Activated naive CD4-positive, alpha-beta T cell treated with anti-CD3 and anti-CD28 coated beads for 36 hours (primary cell): ENCODE measurements at regions of chr7 and their contacts with region 1.

Region 1: GRCh38 chr7:99631295-99632109 is 14.8 kb downstream of the ZSCAN25 start:
- DNase-seq: peak; percentile 85
- H3K4me3 Mint-ChIP-seq: no peak overlapping the region
- H3K27ac Mint-ChIP-seq: peak overlapping the region; percentile 97
- H3K4me1 Mint-ChIP-seq: peaks cover 62% of the 10 kb centered on the region
- H3K27me3 Mint-ChIP-seq: no peaks in the 10 kb centered on the region

Region 2: DNA sequence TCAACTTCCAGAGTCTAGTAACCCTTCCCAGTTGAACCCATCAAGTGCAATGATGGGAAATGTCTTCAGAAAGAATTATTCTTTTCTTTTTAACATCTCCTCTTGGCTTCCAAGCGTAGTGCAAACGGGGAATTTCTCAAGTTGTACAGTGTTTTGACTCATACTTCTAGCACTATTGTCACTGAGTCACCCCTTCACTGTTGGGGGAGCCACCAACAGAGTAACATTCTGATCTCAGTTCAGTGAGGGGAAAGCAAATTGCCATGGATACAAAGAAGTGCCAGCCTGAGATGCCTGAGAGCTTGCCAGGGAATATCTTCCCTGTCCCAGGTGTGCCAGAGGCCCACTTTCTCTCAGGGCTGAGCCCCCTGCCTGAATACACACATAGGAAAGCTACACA is 17.3 kb after region 1 on chr7:
- CTCF ChIA-PET with region 1: no interaction called
- intact Hi-C with region 1: loop called (anchors 2 kb)
- DNase-seq: peak; percentile 74
- H3K4me3 Mint-ChIP-seq: no peak overlapping the region
- H3K27ac Mint-ChIP-seq: peak overlapping the region; percentile 84
- H3K4me1 Mint-ChIP-seq: peaks cover 18% of the 10 kb centered on the region
- H3K27me3 Mint-ChIP-seq: no peaks in the 10 kb centered on the region

Region 3: DNA sequence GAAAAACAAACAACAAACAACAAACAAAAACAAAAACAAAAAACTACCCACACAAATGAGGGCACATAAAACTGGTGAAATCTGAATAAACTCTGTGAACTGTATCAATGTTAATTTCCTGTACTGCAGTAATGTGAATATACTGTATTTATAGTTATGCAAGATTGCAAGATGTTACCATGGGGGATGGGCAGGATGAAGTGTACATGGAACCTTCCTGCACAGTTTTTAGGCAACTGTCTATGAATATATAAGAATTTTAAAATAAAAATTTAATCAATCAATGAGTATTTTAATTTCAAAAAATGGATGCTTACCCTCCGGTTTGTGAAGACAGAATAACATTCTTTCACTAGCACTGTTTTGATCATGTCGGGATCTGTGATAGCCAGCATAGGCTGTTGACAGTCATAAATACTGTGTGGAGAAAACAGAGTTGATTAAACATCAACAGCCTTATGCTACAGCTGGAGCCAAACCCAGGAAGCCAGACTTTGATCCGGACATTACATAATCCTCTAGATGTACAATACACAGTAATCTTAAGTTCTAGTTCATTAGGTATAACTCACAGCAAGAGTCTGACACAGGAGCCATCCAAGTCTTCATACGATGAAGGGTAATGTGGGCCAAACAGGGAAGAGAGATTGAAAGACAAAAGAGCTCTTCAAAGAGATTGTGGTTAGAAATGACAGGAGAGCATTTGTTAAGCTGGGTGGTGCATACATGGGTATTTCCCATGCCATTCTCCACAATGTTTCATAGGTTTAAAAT is 88.7 kb after region 1 on chr7:
- CTCF ChIA-PET with region 1: no interaction called
- intact Hi-C with region 1: loop called (anchors 1 kb)
- DNase-seq: no peak
- H3K4me3 Mint-ChIP-seq: no peak overlapping the region
- H3K27ac Mint-ChIP-seq: no peak overlapping the region
- H3K4me1 Mint-ChIP-seq: peaks cover 19% of the 10 kb centered on the region
- H3K27me3 Mint-ChIP-seq: no peaks in the 10 kb centered on the region

Region 4: GRCh38 chr7:99740573-99741440 is 109.3 kb after region 1 on chr7:
- CTCF ChIA-PET with region 1: no interaction called
- intact Hi-C with region 1: loop called (anchors 2 kb)
- DNase-seq: no peak
- H3K4me3 Mint-ChIP-seq: no peak overlapping the region
- H3K27ac Mint-ChIP-seq: peak overlapping the region; percentile 22
- H3K4me1 Mint-ChIP-seq: peaks cover 15% of the 10 kb centered on the region
- H3K27me3 Mint-ChIP-seq: peaks cover 4% of the 10 kb centered on the region

Region 5: DNA sequence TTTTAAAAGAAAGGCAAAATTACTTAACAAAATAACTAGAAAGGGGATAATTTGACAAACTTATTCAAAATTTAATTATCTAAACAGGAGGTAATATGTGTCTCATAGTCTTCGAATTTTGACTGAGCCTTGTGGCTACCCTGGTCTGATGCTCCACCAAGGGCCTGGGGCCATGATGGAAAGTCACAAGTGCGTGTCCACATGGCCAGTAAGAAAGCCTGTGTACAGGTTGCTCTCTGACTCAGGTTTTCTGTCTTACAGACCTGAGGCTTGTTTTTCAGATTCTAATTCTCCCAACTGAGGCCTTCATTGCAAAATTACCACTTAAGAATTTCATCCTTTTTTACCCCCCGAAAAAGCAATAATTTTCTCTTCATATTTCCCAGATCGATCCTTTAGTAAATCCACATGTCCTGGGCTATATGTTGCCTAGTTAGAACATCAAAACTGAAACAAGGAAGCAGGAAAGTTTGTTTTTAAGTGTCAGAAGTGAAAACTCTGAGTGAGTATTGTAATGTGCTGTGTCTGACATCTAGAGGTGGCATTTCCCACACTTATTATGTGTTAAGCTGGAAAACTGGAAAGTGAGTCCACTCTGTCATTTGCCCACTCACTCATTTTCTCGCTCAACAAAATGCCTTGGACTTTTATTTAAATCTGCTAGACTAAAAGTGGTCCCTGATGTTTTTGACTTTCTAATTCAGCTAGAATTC is 206.3 kb after region 1 on chr7:
- CTCF ChIA-PET with region 1: interaction called, 7 read pairs
- intact Hi-C with region 1: loop called (anchors 1 kb)
- DNase-seq: no peak
- H3K4me3 Mint-ChIP-seq: no peak overlapping the region
- H3K27ac Mint-ChIP-seq: no peak overlapping the region
- H3K4me1 Mint-ChIP-seq: peaks cover 16% of the 10 kb centered on the region
- H3K27me3 Mint-ChIP-seq: no peaks in the 10 kb centered on the region